ENCODE measurements at regions of chr3 and their contacts with region 1.

Region 1: GRCh38 chr3:124467980-124468902 is 262.0 kb upstream of the UMPS start:
- DNase-seq: peak; percentile 39
- H3K4me3 Mint-ChIP-seq: no peak overlapping the region
- H3K27ac Mint-ChIP-seq: no peak overlapping the region
- H3K4me1 Mint-ChIP-seq: no peaks in the 10 kb centered on the region
- H3K27me3 Mint-ChIP-seq: peaks cover 28% of the 10 kb centered on the region

Region 2: GRCh38 chr3:123893012-123893411 is 575.2 kb before region 1 on chr3:
- CTCF ChIA-PET with region 1: no interaction called
- intact Hi-C with region 1: no loop called
- DNase-seq: no peak
- H3K4me3 Mint-ChIP-seq: no peak overlapping the region
- H3K27ac Mint-ChIP-seq: no peak overlapping the region
- H3K4me1 Mint-ChIP-seq: no peaks in the 10 kb centered on the region
- H3K27me3 Mint-ChIP-seq: peaks cover 16% of the 10 kb centered on the region

Region 3: DNA sequence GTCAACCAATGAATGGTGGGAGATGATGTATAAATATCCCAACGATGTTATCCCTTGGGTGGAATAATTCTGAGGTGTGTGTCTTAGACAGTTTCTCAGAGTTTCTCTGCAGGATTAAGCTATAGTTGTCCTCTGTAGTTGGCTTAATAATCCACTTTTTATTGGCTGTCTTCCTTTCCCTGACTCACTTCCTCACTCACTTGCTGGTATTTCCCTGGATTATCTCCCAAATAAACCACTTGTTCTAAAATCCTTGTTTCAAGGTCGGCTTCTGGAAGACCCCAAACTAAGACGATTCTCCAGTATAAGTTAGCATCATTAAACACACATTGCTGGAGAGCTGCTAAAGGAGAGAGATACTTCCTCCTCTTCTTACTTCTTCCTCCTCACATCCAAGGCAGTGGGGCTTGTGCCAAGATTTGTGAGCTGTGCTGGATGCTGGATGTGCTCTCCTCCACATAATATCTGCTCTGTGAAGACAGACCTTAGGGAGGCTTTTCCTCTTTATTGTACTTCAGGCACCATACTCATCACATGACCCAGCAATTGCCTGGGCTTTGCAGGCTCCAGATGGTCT is 453.8 kb before region 1 on chr3:
- CTCF ChIA-PET with region 1: no interaction called
- intact Hi-C with region 1: loop called (anchors 5 kb)
- DNase-seq: no peak
- H3K4me3 Mint-ChIP-seq: no peak overlapping the region
- H3K27ac Mint-ChIP-seq: no peak overlapping the region
- H3K4me1 Mint-ChIP-seq: no peaks in the 10 kb centered on the region
- H3K27me3 Mint-ChIP-seq: peaks cover 32% of the 10 kb centered on the region

Region 4: DNA sequence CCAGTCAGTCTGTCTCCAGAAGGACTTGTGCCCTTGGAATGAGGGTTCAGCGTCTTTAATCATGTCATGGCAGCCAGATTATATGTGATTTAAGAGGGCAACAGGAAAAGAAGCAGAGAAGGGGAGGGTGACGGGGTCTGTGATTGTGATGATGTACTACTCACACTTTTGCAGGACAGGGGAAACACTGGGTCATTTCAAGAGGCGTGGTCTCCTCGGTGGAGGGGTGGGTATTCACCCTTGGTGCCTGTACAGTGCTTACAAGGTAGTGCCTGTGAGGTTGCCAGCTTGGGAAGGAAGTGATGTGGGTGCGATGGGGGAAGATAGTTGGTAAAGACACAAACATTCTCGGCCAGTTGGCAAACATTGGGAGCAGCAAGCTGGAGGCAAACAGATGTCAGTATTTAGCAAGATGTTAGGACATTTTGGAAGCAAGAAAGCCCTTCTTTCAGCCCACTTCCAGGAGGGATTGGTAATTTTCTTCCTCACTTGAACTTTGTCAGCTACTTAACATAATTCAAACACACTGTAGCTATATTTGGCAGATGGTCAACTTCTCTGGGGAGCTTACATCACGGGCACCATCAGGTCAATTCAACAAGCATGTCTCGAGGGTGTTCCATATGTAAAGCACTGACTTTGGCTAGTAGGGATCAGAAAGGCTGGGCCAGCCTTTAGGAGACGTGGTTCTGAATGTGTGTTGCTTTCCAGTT is 404.9 kb before region 1 on chr3:
- CTCF ChIA-PET with region 1: no interaction called
- intact Hi-C with region 1: no loop called
- DNase-seq: no peak
- H3K4me3 Mint-ChIP-seq: no peak overlapping the region
- H3K27ac Mint-ChIP-seq: no peak overlapping the region
- H3K4me1 Mint-ChIP-seq: no peaks in the 10 kb centered on the region
- H3K27me3 Mint-ChIP-seq: peaks cover 5% of the 10 kb centered on the region

Region 5: GRCh38 chr3:124084022-124084881 is 384.0 kb before region 1 on chr3:
- CTCF ChIA-PET with region 1: no interaction called
- intact Hi-C with region 1: loop called (anchors 10 kb)
- DNase-seq: no peak
- H3K4me3 Mint-ChIP-seq: no peak overlapping the region
- H3K27ac Mint-ChIP-seq: no peak overlapping the region
- H3K4me1 Mint-ChIP-seq: no peaks in the 10 kb centered on the region
- H3K27me3 Mint-ChIP-seq: peaks cover 11% of the 10 kb centered on the region

Region 6: DNA sequence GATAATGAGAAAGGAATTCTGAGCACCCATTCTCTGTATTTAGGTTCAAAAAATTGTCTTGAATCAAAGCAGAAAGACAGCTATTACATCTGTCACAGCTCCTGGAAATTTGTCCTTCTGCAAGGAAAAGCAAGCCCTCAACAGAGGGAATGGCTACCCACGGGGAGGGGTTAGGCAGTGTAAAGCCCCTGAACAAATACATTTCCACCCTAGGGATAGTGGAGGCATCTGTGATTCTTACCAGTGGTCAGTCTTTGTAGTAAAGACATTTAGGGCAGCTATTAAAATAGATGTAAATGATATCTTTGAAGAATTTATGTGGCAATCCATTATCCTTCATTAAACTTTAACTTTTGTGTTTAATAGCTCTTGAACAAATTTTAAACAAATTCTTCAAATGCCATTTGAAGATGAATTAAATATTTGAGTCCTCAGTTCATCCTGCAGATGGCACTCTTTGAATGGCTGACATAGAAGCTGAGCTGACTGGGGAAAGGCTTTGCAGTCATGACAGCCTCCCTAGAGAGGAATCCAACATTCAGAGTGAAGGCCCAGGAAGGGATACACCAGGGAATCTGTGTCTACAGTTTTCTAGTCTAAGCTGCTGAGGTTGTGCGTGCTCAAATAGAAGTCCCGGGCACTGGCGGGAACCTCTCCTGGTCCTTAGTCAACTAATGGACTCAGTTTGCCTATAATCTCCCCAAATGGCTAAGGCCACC is 116.7 kb before region 1 on chr3:
- CTCF ChIA-PET with region 1: interaction called, 5 read pairs
- intact Hi-C with region 1: loop called (anchors 1 kb)
- DNase-seq: peak; percentile 5
- H3K4me3 Mint-ChIP-seq: no peak overlapping the region
- H3K27ac Mint-ChIP-seq: no peak overlapping the region
- H3K4me1 Mint-ChIP-seq: no peaks in the 10 kb centered on the region
- H3K27me3 Mint-ChIP-seq: peaks cover 3% of the 10 kb centered on the region

Region 7: GRCh38 chr3:124676236-124676635 is 208.0 kb after region 1 on chr3:
- CTCF ChIA-PET with region 1: no interaction called
- intact Hi-C with region 1: no loop called
- DNase-seq: no peak
- H3K4me3 Mint-ChIP-seq: no peak overlapping the region
- H3K27ac Mint-ChIP-seq: no peak overlapping the region
- H3K4me1 Mint-ChIP-seq: peaks cover 4% of the 10 kb centered on the region
- H3K27me3 Mint-ChIP-seq: no peaks in the 10 kb centered on the region

Region 8: GRCh38 chr3:124700880-124701684 is 232.8 kb after region 1 on chr3:
- CTCF ChIA-PET with region 1: no interaction called
- intact Hi-C with region 1: no loop called
- DNase-seq: no peak
- H3K4me3 Mint-ChIP-seq: no peak overlapping the region
- H3K27ac Mint-ChIP-seq: no peak overlapping the region
- H3K4me1 Mint-ChIP-seq: no peaks in the 10 kb centered on the region
- H3K27me3 Mint-ChIP-seq: peaks cover 6% of the 10 kb centered on the region